ENCODE measurements at regions of chr9 and their contacts with region 1.

Region 1: DNA sequence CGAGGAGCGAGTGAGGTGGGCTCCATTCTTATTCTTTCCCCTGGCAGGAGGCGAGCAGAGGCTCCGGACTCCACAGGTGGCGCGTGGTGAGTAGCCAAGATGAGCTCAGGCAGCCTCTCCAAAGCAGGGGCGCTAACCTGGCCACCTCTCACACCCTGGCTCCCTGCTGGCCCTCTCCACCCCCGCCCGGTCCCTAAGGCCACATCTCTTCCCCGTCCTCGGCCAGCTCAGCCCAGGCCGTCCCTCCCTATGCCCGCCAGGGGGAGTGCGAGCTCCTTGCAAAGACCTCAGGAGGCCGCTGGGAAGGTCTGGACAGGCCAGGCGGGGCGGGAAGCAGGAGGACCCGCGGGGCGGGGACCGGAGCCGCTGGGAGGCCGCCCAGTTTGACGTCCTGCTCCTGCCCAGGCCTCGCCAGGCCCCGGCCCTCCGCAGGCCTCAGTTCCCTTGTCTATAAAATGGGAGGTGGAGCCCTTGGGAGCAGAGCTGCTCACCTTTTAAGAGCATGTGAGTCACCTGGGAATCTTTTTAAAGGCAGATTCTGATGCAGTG is 46.3 kb upstream of the GGTA1 start:
- DNase-seq: peak; percentile 96 to 97 (median 96)
- ATAC-seq: peak; percentile 97 to 99 (median 98)
- H3K4me3 ChIP-seq: peak overlapping the region in 1 of 3 donors; percentile 26
- H3K27ac ChIP-seq: peak overlapping the region in 1 of 3 donors; percentile 4
- H3K4me1 ChIP-seq: peaks cover 0 to 14% (median 3%) of the 10 kb centered on the region in 4 donors
- H3K27me3 ChIP-seq: no peaks in the 10 kb centered on the region
- CTCF ChIP-seq: peak; percentile 94 to 98 (median 96)
- POLR2A ChIP-seq: no peak

Region 2: DNA sequence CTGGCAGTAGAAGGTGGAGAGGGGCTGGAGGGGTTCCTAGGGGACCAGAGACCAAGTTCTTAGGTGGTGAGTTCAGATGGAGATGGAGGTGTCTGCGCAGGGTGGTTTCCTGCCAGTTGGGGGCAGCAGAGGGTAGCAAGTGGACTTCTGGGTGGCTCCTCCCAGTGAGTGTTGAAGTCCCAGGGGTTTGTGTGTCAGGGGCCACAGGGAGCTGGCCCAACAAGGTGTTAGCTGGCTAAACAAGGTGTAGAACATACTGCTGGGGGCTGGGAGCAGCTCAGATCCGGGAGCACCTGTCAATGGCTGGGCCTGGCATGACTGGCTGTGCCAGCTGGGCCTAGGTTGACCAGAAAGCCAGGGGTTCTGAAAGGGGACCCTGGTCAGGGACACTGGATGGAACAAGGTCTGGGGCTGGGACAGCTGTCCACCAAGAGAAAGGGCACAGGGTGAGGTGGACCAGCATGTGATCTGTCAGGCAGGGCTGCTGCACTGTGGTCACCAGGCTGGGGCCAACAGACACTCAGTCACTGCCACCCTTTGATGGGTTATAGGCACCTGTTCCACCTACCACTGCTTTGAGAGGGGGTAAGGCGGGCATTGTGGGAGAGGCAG is 141.1 kb after region 1 on chr9:
- intact Hi-C with region 1: loop called (anchors 5 to 10 kb)
- DNase-seq: peak; percentile 63 to 76 (median 71)
- ATAC-seq: peak; percentile 80 to 88 (median 82)
- H3K4me3 ChIP-seq: no peak overlapping the region
- H3K27ac ChIP-seq: no peak overlapping the region
- H3K4me1 ChIP-seq: no peaks in the 10 kb centered on the region
- H3K27me3 ChIP-seq: no peaks in the 10 kb centered on the region
- CTCF ChIP-seq: peak; percentile 73 to 86 (median 80)
- POLR2A ChIP-seq: no peak

Region 3: DNA sequence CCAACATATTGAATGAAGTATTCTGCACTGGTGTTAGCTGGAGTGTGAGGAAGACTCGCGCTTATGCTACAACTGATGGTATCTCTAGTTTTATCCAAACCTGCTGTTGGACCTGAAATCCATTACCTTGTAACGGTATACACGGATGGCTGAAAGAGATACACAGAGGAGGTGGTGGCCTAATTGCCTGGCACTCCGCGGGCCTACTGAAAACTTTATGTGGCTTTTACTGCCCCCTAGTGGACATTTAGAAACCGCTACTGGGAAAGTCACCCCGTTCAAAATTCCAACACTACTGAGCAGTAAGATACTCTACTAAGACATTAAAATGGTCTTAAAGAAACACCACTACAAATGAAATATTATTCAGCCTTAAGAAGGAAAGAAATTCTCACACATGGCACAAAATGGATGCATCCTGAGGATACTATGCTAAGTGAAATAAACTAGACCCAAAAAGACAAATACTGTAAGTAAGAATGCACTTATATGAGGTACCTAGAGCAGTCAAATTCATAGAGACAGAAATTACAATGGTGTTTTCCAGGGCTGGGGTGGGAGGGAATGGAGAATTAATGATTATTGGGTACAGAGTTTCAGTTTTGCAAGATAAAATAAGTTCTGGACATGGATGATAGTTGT is 446.7 kb after region 1 on chr9:
- intact Hi-C with region 1: loop called (anchors 5 to 10 kb)
- DNase-seq: peak; percentile 49 to 68 (median 59)
- ATAC-seq: peak; percentile 89 to 96 (median 94)
- H3K4me3 ChIP-seq: no peak overlapping the region
- H3K27ac ChIP-seq: no peak overlapping the region
- H3K4me1 ChIP-seq: peaks cover 0 to 8% (median 1%) of the 10 kb centered on the region in 4 donors
- H3K27me3 ChIP-seq: no peaks in the 10 kb centered on the region
- CTCF ChIP-seq: peak; percentile 84 to 93 (median 86)
- POLR2A ChIP-seq: no peak

Region 4: DNA sequence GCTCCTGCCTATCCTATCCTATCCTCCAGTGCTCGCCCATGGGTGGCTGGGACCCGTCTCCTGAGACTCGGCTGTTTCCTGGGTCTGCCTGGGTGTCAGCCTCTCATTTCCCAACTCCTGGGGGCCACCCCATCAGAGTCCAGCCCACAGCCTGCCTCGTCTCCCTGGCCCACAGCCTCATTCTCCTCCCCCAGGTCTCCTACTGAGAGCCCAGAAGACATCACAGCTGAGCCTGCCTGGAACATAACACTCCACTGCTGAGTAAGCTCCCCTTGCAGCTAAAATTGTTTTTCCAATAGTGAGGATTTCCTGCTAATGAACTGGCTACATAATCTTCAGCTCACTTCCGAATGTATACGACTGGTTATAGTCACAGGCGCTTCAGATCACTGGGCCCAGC is 451.8 kb after region 1 on chr9:
- intact Hi-C with region 1: loop called (anchors 5 to 10 kb)
- DNase-seq: no peak
- ATAC-seq: peak in 3 of 4 donors; percentile 5 to 41 (median 34)
- H3K4me3 ChIP-seq: no peak overlapping the region
- H3K27ac ChIP-seq: peak overlapping the region in 2 of 3 donors; percentile 10 to 25
- H3K4me1 ChIP-seq: peaks cover 0 to 55% (median 27%) of the 10 kb centered on the region in 4 donors
- H3K27me3 ChIP-seq: no peaks in the 10 kb centered on the region
- CTCF ChIP-seq: no peak
- POLR2A ChIP-seq: no peak

Measured in right lobe of liver (tissue), 6 donors.